Activated T-helper 1 cell treated with anti-CD3 and anti-CD28 coated beads, Interleukin-12 subunit alpha, Interleukin-12 subunit beta, Interleukin-2, Interleukin-4 antibody, amounts not matched to agents 30 ng/mL and 10 ng/mL and 1 ng/mL, durations not matched to agents 14 hours and 24 hours and 36 hours (primary cell): ENCODE measurements at regions of chr4 and their contacts with region 1.

Region 1: DNA sequence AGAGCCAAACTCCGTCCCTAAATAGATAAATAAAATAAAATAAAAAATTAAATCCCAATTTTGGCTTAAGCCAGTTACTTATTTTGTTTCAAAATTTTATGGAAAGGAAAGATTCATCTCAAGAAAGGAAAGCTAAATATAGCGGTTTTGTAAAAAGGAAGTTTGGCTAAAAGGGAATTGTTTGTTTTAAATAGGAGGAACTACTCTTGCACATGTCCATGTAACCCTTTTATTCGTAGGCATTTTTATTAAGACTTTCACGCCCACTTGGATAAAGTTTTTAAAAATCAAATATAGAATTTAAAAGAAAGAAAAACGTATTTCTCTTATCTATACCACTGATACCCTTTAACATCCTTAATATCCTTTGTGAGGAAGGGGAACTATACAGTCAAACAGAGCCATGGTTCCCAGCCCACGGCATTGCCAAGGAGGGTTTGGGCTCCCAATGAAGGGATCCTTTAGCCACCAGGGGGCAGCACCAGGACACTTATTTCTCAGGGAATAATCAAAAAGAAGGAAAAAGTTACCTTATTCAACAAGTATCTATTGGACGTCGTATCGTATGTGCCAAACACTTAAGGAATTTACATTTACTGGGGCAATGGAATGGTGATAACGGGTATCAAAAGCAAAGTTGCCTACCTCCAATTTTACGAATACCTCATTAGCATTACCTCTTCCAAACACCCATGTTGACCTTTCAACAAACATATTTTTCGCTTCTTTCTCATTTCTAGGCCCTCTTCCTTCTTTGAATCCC is 27.7 kb downstream of the CDKN2AIP start:
- DNase-seq: peak; percentile 56
- H3K4me3 Mint-ChIP-seq: no peak overlapping the region
- H3K27ac Mint-ChIP-seq: no peak overlapping the region
- H3K4me1 Mint-ChIP-seq: peaks cover 6% of the 10 kb centered on the region
- H3K27me3 Mint-ChIP-seq: peaks cover 5% of the 10 kb centered on the region

Region 2: GRCh38 chr4:183517781-183518180 is 45.7 kb after region 1 on chr4:
- intact Hi-C with region 1: no loop called
- DNase-seq: no peak
- H3K4me3 Mint-ChIP-seq: no peak overlapping the region
- H3K27ac Mint-ChIP-seq: no peak overlapping the region
- H3K4me1 Mint-ChIP-seq: no peaks in the 10 kb centered on the region
- H3K27me3 Mint-ChIP-seq: peaks cover 7% of the 10 kb centered on the region

Region 3: GRCh38 chr4:183602557-183603027 is 130.5 kb after region 1 on chr4:
- intact Hi-C with region 1: loop called (anchors 1 kb)
- DNase-seq: no peak
- H3K4me3 Mint-ChIP-seq: no peak overlapping the region
- H3K27ac Mint-ChIP-seq: no peak overlapping the region
- H3K4me1 Mint-ChIP-seq: no peaks in the 10 kb centered on the region
- H3K27me3 Mint-ChIP-seq: peaks cover 8% of the 10 kb centered on the region